Prostate gland (tissue), 2 donors: ENCODE measurements at regions of chr19 and their contacts with region 1.

Region 1: DNA sequence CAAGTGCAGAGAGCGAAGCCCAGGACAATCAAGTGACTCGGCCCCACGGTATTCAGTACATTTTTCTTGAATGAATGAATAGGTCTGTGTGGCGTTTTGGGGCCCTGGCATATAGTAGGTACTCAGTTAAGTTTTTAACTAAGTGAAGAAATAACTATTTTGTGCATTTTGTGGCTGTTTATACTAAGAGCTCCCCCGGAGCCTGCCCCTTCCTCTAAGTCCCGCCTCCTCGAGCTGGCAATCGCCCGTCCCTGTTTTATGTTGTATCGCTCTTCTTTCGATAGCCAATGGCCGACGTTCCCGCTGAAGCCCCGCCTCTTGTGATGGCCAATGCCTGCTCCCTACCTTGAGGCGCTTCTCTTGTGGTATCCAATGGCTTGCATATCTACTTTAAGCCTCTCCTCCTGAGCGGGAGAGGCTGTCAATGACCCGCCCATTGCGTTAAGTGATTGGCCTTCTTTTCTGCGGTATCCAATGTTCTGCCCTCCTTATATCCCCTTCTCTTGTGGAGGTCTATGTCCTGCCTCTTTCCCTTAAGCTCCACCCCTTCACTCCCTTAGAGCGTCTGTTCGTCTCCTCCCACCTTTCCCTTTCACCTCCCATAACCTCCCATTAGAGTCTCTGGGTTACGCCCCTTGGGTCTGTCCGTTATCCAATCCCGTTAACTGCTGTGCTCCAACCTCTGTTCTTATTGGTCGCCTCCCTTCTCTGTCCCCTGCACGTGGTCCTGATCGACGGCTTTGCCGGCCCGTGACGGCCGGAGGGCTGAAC is 509 bp upstream of the HDGFL2 start:
- DNase-seq: peak; percentile 99
- H3K4me3 ChIP-seq: peak overlapping the region; percentile 82 to 88
- H3K27ac ChIP-seq: peak overlapping the region; percentile 72 to 86
- H3K4me1 ChIP-seq: peaks cover 11% of the 10 kb centered on the region
- H3K27me3 ChIP-seq: no peaks in the 10 kb centered on the region
- CTCF ChIP-seq: no peak
- POLR2A ChIP-seq: peak; percentile 64

Region 2: DNA sequence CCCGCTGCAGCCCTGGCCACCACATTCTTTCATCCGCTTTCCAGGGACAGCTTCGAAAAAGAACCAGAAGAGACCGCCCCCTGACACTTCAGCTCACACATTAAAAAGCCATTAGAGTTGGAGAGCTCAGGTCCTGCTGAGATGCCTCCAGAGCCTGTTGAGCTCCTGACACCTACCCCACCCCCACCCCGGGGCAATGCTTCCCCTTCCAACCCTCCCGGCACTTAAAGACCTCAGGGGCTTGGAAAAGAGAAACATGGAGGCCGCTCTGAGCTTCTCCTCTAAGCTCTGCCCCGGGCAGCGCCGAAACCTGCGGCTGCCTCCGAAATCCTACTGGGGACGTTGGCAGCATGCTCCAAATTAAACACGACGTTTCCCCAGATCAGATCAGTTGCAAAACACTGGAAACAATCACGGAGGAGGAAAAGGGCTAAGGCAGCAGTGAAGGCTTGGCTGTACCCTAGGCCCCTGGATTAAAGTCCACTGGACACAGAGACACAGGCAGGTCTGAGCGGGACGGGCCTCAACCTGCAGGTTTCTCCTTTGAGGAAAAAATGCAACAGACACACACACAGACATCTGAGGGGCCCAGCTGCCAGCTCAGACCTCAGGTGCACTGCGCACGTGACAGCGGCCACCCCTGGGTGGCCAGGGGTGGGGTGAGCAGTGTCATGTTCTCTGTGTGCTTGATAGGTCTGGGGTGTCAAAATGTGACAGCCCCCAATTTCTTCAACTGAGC is 80.9 kb before region 1 on chr19:
- intact Hi-C with region 1: no loop called
- DNase-seq: peak; percentile 44
- H3K4me3 ChIP-seq: no peak overlapping the region
- H3K27ac ChIP-seq: peak overlapping the region; percentile 85 to 86
- H3K4me1 ChIP-seq: peaks cover 57% of the 10 kb centered on the region
- H3K27me3 ChIP-seq: no peaks in the 10 kb centered on the region
- CTCF ChIP-seq: no peak
- POLR2A ChIP-seq: no peak

Region 3: DNA sequence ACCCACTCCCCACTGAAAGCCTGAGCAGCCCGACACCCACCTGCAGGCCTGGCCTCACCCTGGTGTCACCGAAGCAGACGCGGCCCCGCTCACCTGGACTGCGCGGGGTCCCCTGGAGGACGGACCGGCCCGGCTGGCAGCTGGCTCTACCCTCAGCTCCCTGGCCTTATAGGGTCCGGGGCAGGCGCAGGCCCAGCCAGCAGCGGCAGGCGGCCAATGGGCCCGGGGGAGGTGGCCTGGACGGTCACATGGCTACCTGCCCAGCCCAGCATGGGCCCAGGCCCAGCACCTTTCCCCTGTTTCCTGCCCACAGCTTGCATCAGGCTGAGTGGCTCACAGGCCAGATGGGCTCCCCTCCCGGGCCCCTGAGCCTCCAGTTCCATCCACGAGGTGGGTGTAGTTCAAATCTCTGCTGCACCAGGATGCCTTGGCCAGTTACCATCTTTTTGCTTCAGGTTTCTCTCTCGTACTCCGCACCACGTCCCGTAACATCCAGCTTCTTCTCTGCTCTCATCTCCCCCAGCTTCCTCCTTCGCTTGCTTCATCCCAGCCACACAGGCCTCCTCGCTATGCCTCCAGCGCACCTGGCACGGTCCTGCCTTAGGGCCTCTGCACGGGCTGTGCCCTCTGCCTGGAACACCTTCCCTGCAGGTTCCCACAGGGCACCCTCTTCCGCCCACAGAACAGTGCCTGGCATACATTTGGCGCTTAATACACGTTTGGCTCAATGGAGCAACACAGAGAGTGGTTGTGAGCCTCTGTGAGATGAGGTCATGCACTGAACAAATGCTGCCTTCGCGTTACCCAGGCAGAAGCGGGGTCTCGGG is 47.0 kb after region 1 on chr19 and contains the start of gene PLIN4:
- intact Hi-C with region 1: loop called (anchors 5 kb)
- DNase-seq: peak; percentile 46
- H3K4me3 ChIP-seq: peak within 1 kb of the TSS; percentile 8 to 11
- H3K27ac ChIP-seq: peak within 1 kb of the TSS; percentile 55 to 62
- H3K4me1 ChIP-seq: no peaks in the 10 kb centered on the region
- H3K27me3 ChIP-seq: no peaks in the 10 kb centered on the region
- CTCF ChIP-seq: no peak
- POLR2A ChIP-seq: peak; percentile 31
- total RNA-seq, gene PLIN4: 8.2 to 13.9 TPM

Region 4: DNA sequence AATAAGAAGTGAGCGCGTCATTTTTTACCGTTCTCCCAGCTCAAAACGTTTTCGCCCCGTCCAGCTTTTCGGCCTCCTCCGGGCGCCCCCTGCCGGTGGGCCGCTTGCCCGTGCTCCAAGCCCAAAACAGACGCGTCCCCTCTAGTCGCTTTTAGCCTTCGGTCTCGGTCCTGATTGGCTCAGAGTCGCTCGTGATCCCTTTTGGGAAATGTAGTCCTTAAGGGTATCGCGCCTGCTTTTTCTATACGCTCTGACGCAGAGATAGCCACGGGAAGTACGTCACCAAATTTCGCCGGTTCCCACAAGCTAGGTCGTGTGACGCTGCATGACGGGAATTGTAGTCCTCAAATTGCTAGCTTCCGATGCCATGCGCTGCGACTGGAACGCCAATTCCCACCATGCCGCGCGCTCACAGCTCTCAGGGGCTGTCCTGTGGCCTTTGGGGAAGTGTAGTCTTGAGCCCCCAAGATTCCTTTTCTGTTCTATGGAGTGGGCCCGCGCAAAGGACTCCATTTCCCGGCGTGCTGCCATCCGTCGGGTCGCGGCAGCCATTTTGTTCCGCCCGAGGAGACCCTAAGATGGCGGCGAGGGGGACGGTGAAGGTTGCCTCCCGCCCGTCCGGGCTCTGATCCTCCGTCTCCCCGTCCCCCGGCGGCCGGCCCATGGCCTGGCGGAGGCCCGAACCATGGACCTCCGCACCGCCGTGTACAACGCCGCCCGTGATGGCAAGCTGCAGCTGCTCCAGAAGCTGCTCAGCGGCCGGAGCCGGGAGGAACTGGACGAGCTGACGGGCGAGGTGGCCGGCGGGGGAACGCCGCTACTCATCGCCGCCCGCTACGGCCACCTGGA is 319.8 kb after region 1 on chr19 and contains the start of gene FEM1A:
- intact Hi-C with region 1: no loop called
- DNase-seq: peak; percentile 100
- H3K4me3 ChIP-seq: peak within 1 kb of the TSS; percentile 92 to 94
- H3K27ac ChIP-seq: peak within 1 kb of the TSS; percentile 89 to 90
- H3K4me1 ChIP-seq: peaks cover 21% of the 10 kb centered on the region
- H3K27me3 ChIP-seq: no peaks in the 10 kb centered on the region
- CTCF ChIP-seq: peak; percentile 90 to 100 (median 98)
- POLR2A ChIP-seq: peak; percentile 72
- total RNA-seq, gene FEM1A: 20.7 to 30.4 TPM